Activated CD4-positive, alpha-beta memory T cell treated with anti-CD3 and anti-CD28 coated beads, Interleukin-2, amount 10 ng/mL, durations not matched to agents 7 days and 5 days (primary cell): ENCODE measurements at regions of chr5 and their contacts with region 1.

Region 1: GRCh38 chr5:171387345-171387969 is at the start of gene NPM1:
- DNase-seq: peak; percentile 97
- H3K4me3 Mint-ChIP-seq: peak within 1 kb of the TSS; percentile 99
- H3K27ac Mint-ChIP-seq: peak within 1 kb of the TSS; percentile 98
- H3K4me1 Mint-ChIP-seq: peaks cover 53% of the 10 kb centered on the region
- H3K27me3 Mint-ChIP-seq: peaks cover 2% of the 10 kb centered on the region
- total RNA-seq, gene NPM1: 1,119 to 1,157 TPM

Region 2: GRCh38 chr5:171355302-171355724 is 32.1 kb before region 1 on chr5:
- CTCF ChIA-PET with region 1: no interaction called
- POLR2A ChIA-PET with region 1: interaction called, 11 read pairs
- DNase-seq: peak; percentile 60
- H3K4me3 Mint-ChIP-seq: peak overlapping the region; percentile 64
- H3K27ac Mint-ChIP-seq: peak overlapping the region; percentile 71
- H3K4me1 Mint-ChIP-seq: peaks cover 19% of the 10 kb centered on the region
- H3K27me3 Mint-ChIP-seq: no peaks in the 10 kb centered on the region

Region 3: DNA sequence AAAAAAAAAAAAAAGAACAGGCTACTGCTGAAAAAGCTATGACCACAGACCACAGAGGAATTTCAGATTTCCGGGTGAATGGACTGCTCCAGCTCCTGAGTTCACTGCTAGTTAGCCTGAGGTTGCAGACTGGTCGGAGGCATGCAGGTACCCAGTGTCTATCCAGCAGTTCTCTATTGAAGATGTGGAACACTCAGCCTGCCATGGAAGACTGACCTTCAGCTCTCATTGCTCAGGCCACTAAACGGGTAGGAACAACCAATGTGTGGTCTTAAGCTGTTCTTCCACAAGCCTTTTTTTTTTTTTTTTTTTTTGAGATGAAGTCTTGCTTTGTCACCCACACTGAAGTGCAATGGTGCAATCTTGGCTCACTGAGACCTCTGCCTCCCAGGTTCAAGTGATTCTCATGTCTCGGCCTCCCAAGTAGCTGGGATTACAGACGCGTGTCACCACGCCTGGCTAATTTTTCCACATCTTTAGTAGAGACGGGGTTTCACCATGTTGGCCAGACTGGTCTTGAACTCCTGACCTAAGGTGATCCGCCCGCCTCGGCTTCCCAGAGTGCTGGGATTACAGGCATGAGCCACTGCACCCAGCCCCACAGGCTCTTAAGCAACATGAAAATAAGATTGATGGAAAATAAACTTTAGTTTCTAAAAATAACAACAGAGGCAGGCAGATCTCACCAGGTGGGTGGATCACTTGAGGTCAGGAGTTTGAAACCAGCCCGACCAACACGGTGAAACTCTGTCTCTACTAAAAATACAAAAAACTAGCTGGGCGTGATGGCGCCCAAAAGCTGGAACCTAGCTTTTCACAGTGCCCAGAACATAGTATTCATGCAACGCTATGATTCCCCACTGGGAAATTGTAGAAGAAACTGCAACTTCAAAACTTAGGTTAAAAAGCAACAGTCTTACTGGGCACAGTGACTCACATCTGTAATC is 19.8 kb before region 1 on chr5:
- CTCF ChIA-PET with region 1: interaction called, 3 read pairs
- POLR2A ChIA-PET with region 1: interaction called, 16 read pairs
- DNase-seq: no peak
- H3K4me3 Mint-ChIP-seq: no peak overlapping the region
- H3K27ac Mint-ChIP-seq: no peak overlapping the region
- H3K4me1 Mint-ChIP-seq: peaks cover 8% of the 10 kb centered on the region
- H3K27me3 Mint-ChIP-seq: peaks cover 13% of the 10 kb centered on the region

Region 4: GRCh38 chr5:171405601-171406005 is 18.1 kb after region 1 on chr5:
- CTCF ChIA-PET with region 1: interaction called, 6 read pairs
- POLR2A ChIA-PET with region 1: interaction called, 54 read pairs
- DNase-seq: no peak
- H3K4me3 Mint-ChIP-seq: no peak overlapping the region
- H3K27ac Mint-ChIP-seq: no peak overlapping the region
- H3K4me1 Mint-ChIP-seq: peaks cover 52% of the 10 kb centered on the region
- H3K27me3 Mint-ChIP-seq: no peaks in the 10 kb centered on the region

Region 5: DNA sequence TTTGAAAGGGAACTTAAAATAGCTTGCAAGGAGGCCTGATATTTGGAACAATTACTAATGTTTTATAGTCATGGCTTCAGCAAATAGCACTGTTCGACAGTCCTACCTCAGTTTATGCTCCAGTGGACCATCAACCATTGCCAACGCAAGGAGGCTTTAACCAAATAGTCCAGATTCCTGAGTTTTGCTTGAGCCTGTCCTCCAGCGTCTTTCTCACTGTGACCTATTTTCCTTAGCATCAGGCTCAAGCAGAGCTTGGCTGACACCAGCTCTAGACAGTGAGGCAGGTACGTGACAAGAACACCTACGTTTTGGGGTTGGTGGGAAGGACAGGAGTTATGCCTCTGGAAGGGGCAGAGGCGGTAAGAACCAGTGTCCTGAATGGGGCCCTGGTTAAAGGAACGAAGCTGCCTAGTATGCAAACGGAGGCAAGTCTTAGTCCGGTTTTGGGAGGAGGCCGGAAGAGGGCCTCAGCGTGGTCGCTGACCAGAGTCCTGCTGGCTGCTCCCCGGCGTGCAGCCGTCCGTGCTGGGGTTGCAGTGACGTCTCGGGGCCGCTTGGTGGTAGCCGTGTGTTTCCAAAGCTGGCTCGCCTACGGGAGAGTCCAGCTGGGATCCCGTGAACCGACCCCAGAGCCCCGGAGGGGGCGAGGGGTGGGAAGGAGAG is 31.0 kb after region 1 on chr5:
- CTCF ChIA-PET with region 1: interaction called, 7 read pairs
- POLR2A ChIA-PET with region 1: interaction called, 11 read pairs
- DNase-seq: peak; percentile 64
- H3K4me3 Mint-ChIP-seq: peak overlapping the region; percentile 64
- H3K27ac Mint-ChIP-seq: no peak overlapping the region
- H3K4me1 Mint-ChIP-seq: peaks cover 10% of the 10 kb centered on the region
- H3K27me3 Mint-ChIP-seq: peaks cover 30% of the 10 kb centered on the region